HepG2 (cell line): ENCODE measurements at regions of chr2 and their contacts with region 1.

Region 1: GRCh38 chr2:210370562-210370961 is 55.6 kb upstream of the MYL1 start:
- DNase-seq: no peak
- ATAC-seq: peak; percentile 55; the same call in 2 of the 3 replicates
- H3K4me3 ChIP-seq: no peak overlapping the region
- H3K27ac ChIP-seq: no peak overlapping the region
- H3K4me1 ChIP-seq: no peaks in the 10 kb centered on the region
- H3K27me3 ChIP-seq: no peaks in the 10 kb centered on the region; a peak in 1 of 5 replicates
- CTCF ChIP-seq: no peak
- EP300 ChIP-seq: no peak
- POLR2A ChIP-seq: no peak
- RAD21 ChIP-seq: no peak

Region 2: DNA sequence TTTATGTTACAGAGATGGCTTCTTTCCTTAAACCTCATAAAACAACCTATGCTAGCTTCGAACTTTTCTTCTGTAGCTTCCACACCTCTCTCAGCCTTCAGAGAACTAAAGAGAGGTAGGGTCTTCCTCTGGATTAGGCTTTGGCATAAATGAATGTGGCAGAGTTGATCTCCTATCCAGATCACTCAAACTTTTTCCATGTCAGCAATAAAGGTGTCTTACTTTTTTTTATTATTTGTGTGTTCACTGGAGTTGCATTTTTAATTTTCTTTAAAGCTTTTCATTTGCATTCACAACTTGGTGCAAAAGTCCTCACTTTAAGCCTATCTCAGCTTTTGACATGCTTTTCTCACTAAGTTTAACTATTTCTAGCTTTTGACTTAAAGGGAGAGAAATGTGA is 40.0 kb after region 1 on chr2:
- CTCF ChIA-PET with region 1: no interaction called
- POLR2A ChIA-PET with region 1: no interaction called
- in situ Hi-C with region 1: no loop called
- intact Hi-C with region 1: loop called (anchors 1 kb)
- DNase-seq: no peak
- ATAC-seq: no peak
- H3K4me3 ChIP-seq: no peak overlapping the region
- H3K27ac ChIP-seq: no peak overlapping the region
- H3K4me1 ChIP-seq: no peaks in the 10 kb centered on the region
- H3K27me3 ChIP-seq: no peaks in the 10 kb centered on the region; a peak in 1 of 5 replicates
- CTCF ChIP-seq: no peak
- EP300 ChIP-seq: no peak
- POLR2A ChIP-seq: no peak
- RAD21 ChIP-seq: no peak

Region 3: GRCh38 chr2:210519594-210519993 is 149.0 kb after region 1 on chr2:
- CTCF ChIA-PET with region 1: no interaction called
- POLR2A ChIA-PET with region 1: no interaction called
- in situ Hi-C with region 1: no loop called
- intact Hi-C with region 1: no loop called
- DNase-seq: no peak
- ATAC-seq: no peak
- H3K4me3 ChIP-seq: no peak overlapping the region
- H3K27ac ChIP-seq: no peak overlapping the region
- H3K4me1 ChIP-seq: peaks cover 31% of the 10 kb centered on the region
- H3K27me3 ChIP-seq: no peaks in the 10 kb centered on the region
- CTCF ChIP-seq: no peak
- EP300 ChIP-seq: no peak
- POLR2A ChIP-seq: no peak
- RAD21 ChIP-seq: no peak